Naive thymus-derived CD4-positive, alpha-beta T cell (primary cell): ENCODE measurements at regions of chr3 and their contacts with region 1.

Region 1: DNA sequence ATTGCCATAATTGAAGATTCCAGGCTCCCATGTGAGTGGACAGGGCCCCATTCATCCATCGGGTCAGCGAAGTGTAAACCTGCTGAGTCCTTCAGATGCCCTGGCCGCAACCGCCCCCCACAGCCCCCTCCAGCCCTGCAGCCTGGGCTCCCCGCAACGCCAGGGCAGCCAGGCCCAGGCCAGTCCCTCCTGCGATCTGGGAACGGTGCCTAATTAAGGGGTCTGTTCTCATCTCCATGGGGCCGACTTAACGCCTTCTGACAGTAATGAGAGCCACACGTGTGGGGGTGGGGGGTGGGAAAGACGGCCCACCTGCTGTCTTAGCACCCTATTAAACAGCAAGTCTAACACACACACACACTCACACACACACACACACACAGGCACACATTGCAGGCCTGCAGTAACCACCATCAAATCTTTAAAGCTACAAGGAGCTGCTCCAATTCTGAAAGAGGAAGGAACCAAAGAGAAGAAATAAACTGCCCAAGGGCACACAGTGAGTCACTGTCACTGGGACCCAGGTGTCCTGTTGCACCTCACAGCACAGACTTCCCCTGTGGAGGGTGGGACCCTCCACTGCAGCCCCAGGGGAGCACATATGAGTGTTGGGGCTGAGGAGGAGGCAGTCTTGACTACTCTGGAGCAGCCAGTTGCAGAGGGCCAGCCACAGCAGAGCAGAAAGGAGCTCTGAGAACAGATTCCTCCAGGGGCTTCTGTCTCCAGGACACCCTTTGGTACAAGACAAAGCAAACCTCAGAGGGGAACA is 31.8 kb upstream of the HES1 start:
- DNase-seq: no peak
- ATAC-seq: peak; percentile 39
- H3K4me3 ChIP-seq: no peak overlapping the region
- H3K4me3 Mint-ChIP-seq: peak overlapping the region in 1 of 10 donors; percentile 26
- H3K27ac ChIP-seq: no peak overlapping the region
- H3K27ac Mint-ChIP-seq: peak overlapping the region in 4 of 9 donors; percentile 35 to 81 (median 72)
- H3K4me1 ChIP-seq: peaks cover 0 to 6% of the 10 kb centered on the region in 2 donors
- H3K4me1 Mint-ChIP-seq: peaks cover 7 to 26% (median 8%) of the 10 kb centered on the region in 7 donors
- H3K27me3 ChIP-seq: no peaks in the 10 kb centered on the region
- H3K27me3 Mint-ChIP-seq: peaks cover 0 to 53% (median 0%) of the 10 kb centered on the region in 5 donors

Region 2: GRCh38 chr3:193665370-193665989 is 438.7 kb before region 1 on chr3:
- CTCF ChIA-PET with region 1: interaction called, 4 read pairs
- POLR2A ChIA-PET with region 1: no interaction called
- intact Hi-C with region 1: loop called in 1 of 2 experiments (anchors 1 kb)
- DNase-seq: peak in 6 of 9 donors; percentile 4 to 43 (median 24)
- ATAC-seq: no peak
- H3K4me3 ChIP-seq: no peak overlapping the region
- H3K4me3 Mint-ChIP-seq: no peak overlapping the region
- H3K27ac ChIP-seq: no peak overlapping the region
- H3K27ac Mint-ChIP-seq: no peak overlapping the region
- H3K4me1 ChIP-seq: no peaks in the 10 kb centered on the region
- H3K4me1 Mint-ChIP-seq: no peaks in the 10 kb centered on the region
- H3K27me3 ChIP-seq: no peaks in the 10 kb centered on the region
- H3K27me3 Mint-ChIP-seq: no peaks in the 10 kb centered on the region

Region 3: DNA sequence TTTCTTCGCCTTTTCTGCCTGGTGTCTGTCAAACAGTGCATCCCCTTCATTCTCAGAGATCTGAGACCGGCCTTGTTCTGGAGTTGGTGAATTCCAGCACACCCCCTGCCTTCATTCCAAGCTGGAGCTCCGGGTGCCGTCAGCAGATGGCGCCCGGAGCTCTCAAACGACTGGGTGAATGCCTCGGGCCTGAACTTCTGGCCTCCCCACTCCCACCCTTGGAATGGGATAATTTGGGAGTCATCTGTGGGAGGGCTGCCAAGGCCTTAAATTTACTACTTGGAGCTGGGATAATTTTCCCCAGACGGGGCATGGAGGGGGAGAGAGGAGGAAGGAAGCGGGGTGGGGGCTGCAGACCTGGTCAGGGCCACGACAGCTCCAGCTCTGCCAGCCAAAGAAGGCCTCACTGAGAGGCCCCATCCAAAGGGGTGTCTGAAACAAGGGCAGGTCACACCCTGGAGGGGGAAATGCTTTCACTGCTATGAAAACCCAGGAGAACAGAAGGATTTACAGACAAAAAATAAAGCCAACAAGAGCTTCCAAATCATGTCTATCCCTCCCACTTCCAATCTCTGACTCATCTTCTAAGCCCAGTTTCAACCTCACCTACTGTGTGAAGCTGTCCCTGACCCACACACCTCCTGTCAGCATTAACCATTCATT is 323.2 kb before region 1 on chr3:
- CTCF ChIA-PET with region 1: no interaction called
- POLR2A ChIA-PET with region 1: no interaction called
- intact Hi-C with region 1: loop called in 1 of 2 experiments (anchors 2 kb)
- DNase-seq: peak in 2 of 9 donors; percentile 4 to 13
- ATAC-seq: no peak
- H3K4me3 ChIP-seq: no peak overlapping the region
- H3K4me3 Mint-ChIP-seq: no peak overlapping the region
- H3K27ac ChIP-seq: no peak overlapping the region
- H3K27ac Mint-ChIP-seq: peak overlapping the region in 1 of 9 donors; percentile 45
- H3K4me1 ChIP-seq: peaks cover 0 to 5% of the 10 kb centered on the region in 2 donors
- H3K4me1 Mint-ChIP-seq: peaks cover 4 to 35% (median 9%) of the 10 kb centered on the region in 7 donors
- H3K27me3 ChIP-seq: peaks cover 0 to 3% of the 10 kb centered on the region in 2 donors
- H3K27me3 Mint-ChIP-seq: peaks cover 21 to 60% (median 37%) of the 10 kb centered on the region in 5 donors

Region 4: DNA sequence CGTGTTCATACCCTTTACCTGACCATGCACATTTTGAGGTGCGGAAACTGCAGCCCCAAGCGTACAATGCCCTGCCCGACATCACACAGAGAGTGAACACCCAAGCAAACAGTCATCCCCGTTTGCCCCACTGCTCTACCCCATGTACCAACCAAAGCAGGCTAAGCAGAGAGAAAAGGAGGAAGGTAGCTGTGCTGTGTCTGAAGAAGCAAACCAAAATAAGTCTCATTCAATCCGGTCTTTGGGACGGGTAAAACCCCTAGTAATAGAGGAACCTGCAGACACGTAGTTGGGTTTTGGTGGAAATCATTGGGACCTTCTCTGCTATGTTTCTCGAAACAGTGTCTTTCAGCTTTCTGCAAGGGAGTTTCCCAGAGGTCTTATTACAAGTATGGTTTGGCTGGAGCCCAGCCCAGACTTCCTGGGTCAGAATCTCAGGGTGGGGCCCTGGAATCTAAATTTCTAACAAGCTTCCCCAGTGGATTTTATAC is 132.9 kb before region 1 on chr3:
- CTCF ChIA-PET with region 1: no interaction called
- POLR2A ChIA-PET with region 1: no interaction called
- intact Hi-C with region 1: loop called in 1 of 2 experiments (anchors 10 kb)
- DNase-seq: no peak
- ATAC-seq: peak; percentile 86
- H3K4me3 ChIP-seq: no peak overlapping the region
- H3K4me3 Mint-ChIP-seq: peak overlapping the region in 7 of 10 donors; percentile 18 to 67 (median 51)
- H3K27ac ChIP-seq: no peak overlapping the region
- H3K27ac Mint-ChIP-seq: no peak overlapping the region
- H3K4me1 ChIP-seq: peaks cover 0 to 10% of the 10 kb centered on the region in 2 donors
- H3K4me1 Mint-ChIP-seq: peaks cover 0 to 28% (median 20%) of the 10 kb centered on the region in 7 donors
- H3K27me3 ChIP-seq: no peaks in the 10 kb centered on the region
- H3K27me3 Mint-ChIP-seq: peaks cover 6 to 74% (median 24%) of the 10 kb centered on the region in 5 donors

Region 5: GRCh38 chr3:194003125-194004057 is 100.8 kb before region 1 on chr3:
- CTCF ChIA-PET with region 1: no interaction called
- POLR2A ChIA-PET with region 1: no interaction called
- intact Hi-C with region 1: loop called in 1 of 2 experiments (anchors 5 kb)
- DNase-seq: peak in 4 of 9 donors; percentile 5 to 32 (median 14)
- ATAC-seq: peak; percentile 86
- H3K4me3 ChIP-seq: no peak overlapping the region
- H3K4me3 Mint-ChIP-seq: peak overlapping the region; percentile 33 to 76 (median 60)
- H3K27ac ChIP-seq: no peak overlapping the region
- H3K27ac Mint-ChIP-seq: no peak overlapping the region
- H3K4me1 ChIP-seq: no peaks in the 10 kb centered on the region
- H3K4me1 Mint-ChIP-seq: peaks cover 0 to 16% (median 10%) of the 10 kb centered on the region in 7 donors
- H3K27me3 ChIP-seq: no peaks in the 10 kb centered on the region
- H3K27me3 Mint-ChIP-seq: peaks cover 19 to 63% (median 30%) of the 10 kb centered on the region in 5 donors

Region 6: DNA sequence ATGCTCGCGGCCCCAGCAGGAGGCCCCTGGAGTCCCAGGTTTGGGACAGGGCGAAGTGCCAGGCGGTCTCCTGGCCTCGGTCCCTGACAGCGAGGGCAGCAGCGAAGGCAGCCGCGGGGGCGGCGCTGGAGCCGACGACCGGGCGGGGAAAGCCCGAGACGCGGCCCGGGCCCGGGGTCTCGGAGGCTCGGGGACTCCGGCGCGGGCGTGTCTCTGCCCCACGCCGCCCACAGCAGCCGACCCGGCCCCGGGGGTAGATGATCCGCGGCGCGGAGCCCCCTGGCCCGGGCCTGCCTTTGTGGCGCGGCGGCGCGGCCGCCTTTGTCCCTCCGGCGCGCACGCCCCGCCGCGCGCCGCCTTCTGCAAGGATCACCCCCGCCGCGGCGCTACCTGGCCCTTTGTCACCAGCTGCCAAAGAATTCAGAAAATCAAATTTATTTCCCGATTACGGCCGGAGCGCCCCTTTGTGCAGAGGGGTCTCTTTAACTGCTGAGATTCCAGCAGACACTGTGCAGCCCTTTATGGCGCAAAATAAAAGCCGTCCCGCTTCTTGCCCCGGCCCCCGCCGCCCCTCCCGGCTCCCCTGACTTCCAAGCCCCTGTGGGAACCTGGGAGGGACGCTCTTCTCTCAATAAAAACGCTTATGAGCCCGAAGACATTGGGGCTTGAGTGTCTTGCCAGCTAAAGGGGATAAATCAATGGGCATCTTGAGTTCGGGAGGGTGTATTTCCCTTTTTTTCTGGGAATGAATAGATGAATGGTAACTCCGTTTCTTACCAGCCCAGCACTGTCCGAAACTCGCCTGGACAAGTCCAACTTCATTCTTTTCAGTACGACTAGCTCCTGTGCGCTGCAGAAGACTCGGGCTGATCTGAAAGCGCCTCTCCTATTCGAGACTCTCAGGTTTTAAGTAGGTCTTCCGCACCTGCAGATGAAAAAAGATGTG is 100.1 kb after region 1 on chr3:
- CTCF ChIA-PET with region 1: no interaction called
- POLR2A ChIA-PET with region 1: no interaction called
- intact Hi-C with region 1: loop called in 1 of 2 experiments (anchors 1 kb)
- DNase-seq: peak in 4 of 9 donors; percentile 4 to 38 (median 12)
- ATAC-seq: peak; percentile 52
- H3K4me3 ChIP-seq: peak overlapping the region; percentile 53
- H3K4me3 Mint-ChIP-seq: peak overlapping the region; percentile 85 to 95 (median 90)
- H3K27ac ChIP-seq: peak overlapping the region; percentile 18
- H3K27ac Mint-ChIP-seq: peak overlapping the region in 8 of 9 donors; percentile 48 to 92 (median 74)
- H3K4me1 ChIP-seq: peaks cover 0 to 9% of the 10 kb centered on the region in 2 donors
- H3K4me1 Mint-ChIP-seq: peaks cover 10 to 39% (median 30%) of the 10 kb centered on the region in 7 donors
- H3K27me3 ChIP-seq: peaks cover 0 to 6% of the 10 kb centered on the region in 2 donors
- H3K27me3 Mint-ChIP-seq: peaks cover 0 to 34% (median 17%) of the 10 kb centered on the region in 5 donors

Region 7: DNA sequence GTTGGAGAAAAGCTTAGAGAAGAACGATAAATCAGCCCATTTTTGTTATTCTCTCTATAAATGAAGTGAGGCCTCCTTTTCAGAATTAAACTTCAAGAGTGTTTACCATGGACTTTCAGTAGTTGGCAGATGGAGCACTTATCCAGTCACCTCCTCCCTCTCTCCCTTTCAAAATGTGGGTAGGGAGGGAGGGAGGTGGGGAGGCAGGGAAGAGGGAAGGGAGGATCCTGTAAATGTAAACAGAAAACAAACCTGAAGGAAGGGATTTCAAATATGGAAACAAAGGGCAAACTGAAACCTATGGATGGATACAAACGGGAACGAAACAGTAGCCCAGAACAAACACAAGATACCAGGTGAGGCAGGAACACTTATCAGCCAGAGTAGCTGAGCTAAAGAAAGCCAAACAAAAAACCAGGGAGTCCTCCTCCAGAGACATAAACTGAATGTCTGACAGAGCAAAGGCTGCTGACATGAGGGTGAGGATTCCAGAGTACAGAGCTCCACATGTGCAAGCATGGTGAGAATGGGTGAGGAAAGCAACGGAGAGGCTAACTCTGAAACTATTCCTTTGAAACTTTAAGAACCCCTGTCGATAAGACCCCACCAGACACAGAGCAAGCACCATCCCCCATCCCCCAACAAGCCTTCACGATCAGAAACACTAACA is 335.8 kb after region 1 on chr3:
- CTCF ChIA-PET with region 1: no interaction called
- POLR2A ChIA-PET with region 1: no interaction called
- intact Hi-C with region 1: no loop called
- DNase-seq: no peak
- ATAC-seq: no peak
- H3K4me3 ChIP-seq: no peak overlapping the region
- H3K4me3 Mint-ChIP-seq: no peak overlapping the region
- H3K27ac ChIP-seq: no peak overlapping the region
- H3K27ac Mint-ChIP-seq: no peak overlapping the region
- H3K4me1 ChIP-seq: no peaks in the 10 kb centered on the region
- H3K4me1 Mint-ChIP-seq: peaks cover 0 to 16% (median 0%) of the 10 kb centered on the region in 7 donors
- H3K27me3 ChIP-seq: no peaks in the 10 kb centered on the region
- H3K27me3 Mint-ChIP-seq: no peaks in the 10 kb centered on the region